Heart right ventricle (tissue), 16 donors: ENCODE measurements at regions of chr1 and their contacts with region 1.

Region 1: DNA sequence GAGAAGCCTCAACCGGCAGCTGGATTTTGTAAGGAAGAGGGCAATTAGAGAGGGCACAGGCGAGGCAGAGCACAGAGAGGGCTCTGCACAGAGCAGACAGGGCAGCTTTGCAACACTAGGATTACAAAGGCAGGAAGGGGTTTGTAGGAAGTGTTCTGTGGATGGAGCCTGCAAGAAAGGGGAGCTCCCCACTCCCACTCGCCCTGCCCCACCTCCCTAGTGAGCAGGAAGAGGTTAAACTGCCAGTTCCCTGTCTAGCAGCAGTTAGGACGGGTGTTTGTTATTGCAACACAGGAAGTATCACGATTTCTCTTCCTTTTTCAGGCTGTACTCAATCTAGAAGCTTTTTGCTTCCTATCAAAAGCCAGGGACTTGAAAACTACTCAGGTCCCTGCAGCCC is 63.3 kb upstream of the LRRC8D start:
- DNase-seq: peak; percentile 32 to 39
- ATAC-seq: peak; percentile 32 to 81 (median 66)
- H3K4me3 ChIP-seq: peak overlapping the region in 5 of 10 donors; percentile 2 to 31 (median 18)
- H3K27ac ChIP-seq: peak overlapping the region in 9 of 10 donors; percentile 26 to 81 (median 70)
- H3K4me1 ChIP-seq: peaks cover 8 to 94% (median 58%) of the 10 kb centered on the region in 9 donors
- H3K27me3 ChIP-seq: no peaks in the 10 kb centered on the region
- CTCF ChIP-seq: no peak

Region 2: GRCh38 chr1:89706700-89707012 is 50.9 kb before region 1 on chr1:
- intact Hi-C with region 1: loop called in 1 of 10 experiments (anchors 10 kb)
- DNase-seq: no peak
- ATAC-seq: peak in 1 of 8 donors; percentile 31
- H3K4me3 ChIP-seq: no peak overlapping the region
- H3K27ac ChIP-seq: peak overlapping the region in 1 of 10 donors; percentile 42
- H3K4me1 ChIP-seq: peaks cover 5 to 46% (median 13%) of the 10 kb centered on the region in 9 donors
- H3K27me3 ChIP-seq: no peaks in the 10 kb centered on the region
- CTCF ChIP-seq: no peak

Region 3: DNA sequence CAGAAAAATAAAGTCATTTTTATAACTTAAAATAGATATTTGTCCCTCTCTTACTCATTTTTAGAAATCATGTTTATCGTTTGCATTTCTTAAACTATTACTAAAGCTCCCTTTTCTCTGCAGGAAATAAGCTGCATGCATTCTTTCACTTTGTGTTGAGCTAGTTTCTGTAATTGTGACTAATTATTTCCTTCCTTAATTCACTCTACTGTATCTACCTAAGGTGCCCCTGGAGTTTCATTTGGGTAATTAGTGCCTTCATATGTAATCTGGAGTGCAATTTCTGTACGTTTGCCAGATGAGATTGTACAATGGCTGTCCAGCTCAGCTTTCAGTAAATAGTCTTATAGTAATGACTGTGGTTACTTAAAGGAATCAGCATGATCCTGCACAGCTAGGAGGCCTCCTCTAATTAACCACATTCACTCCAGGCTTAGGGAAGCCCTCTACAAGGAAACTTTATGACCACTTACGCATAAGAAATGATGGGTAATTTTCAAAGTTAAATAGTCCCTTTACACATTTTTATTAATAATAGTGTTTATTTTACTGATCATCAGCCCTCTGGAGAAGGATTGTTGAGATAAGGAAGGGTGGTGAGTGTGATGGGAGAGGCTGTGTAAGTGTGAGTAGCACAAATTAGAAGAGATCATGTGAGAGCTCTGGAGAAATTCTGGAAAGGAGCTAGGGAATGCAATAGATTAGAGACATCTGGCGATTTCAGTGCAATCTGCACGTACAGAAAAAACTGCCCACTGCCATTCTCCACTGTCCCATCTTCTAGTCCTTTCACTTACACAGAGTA is 37.8 kb before region 1 on chr1:
- intact Hi-C with region 1: loop called in 5 of 10 experiments (anchors 5 kb)
- DNase-seq: no peak
- ATAC-seq: peak in 2 of 8 donors; percentile 14 to 37
- H3K4me3 ChIP-seq: peak overlapping the region in 1 of 10 donors; percentile 5
- H3K27ac ChIP-seq: peak overlapping the region in 7 of 10 donors; percentile 18 to 86 (median 54)
- H3K4me1 ChIP-seq: peaks cover 9 to 68% (median 44%) of the 10 kb centered on the region in 9 donors
- H3K27me3 ChIP-seq: no peaks in the 10 kb centered on the region
- CTCF ChIP-seq: no peak

Region 4: GRCh38 chr1:89728381-89728780 is 29.2 kb before region 1 on chr1:
- intact Hi-C with region 1: loop called in 6 of 10 experiments (anchors 2 to 5 kb)
- DNase-seq: no peak
- ATAC-seq: peak; percentile 18 to 69 (median 60)
- H3K4me3 ChIP-seq: peak overlapping the region in 4 of 10 donors; percentile 6 to 25 (median 18)
- H3K27ac ChIP-seq: peak overlapping the region; percentile 56 to 86 (median 68)
- H3K4me1 ChIP-seq: peaks cover 9 to 59% (median 48%) of the 10 kb centered on the region in 9 donors
- H3K27me3 ChIP-seq: no peaks in the 10 kb centered on the region
- CTCF ChIP-seq: no peak

Region 5: DNA sequence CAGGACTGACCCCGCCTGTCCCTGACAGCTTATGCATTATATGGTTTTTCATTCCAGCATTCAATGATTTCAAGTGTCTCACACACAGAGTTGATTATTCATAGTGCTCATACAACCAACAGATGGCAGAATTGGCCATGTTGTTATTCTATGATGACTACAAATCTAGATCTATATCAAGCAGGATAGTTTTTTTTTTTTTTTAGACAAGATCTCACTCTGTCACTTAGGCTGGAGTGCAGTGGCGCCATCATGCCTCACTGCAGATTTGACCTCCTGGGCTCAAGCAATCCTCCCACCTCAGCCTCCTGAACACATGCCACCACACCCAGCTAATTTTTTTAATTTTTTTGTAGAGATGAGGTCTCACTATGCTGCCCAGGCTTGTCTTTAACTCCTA is 23.2 kb after region 1 on chr1:
- intact Hi-C with region 1: no loop called
- DNase-seq: no peak
- ATAC-seq: no peak
- H3K4me3 ChIP-seq: no peak overlapping the region
- H3K27ac ChIP-seq: no peak overlapping the region
- H3K4me1 ChIP-seq: no peaks in the 10 kb centered on the region
- H3K27me3 ChIP-seq: peaks cover 0 to 3% (median 0%) of the 10 kb centered on the region in 7 donors
- CTCF ChIP-seq: peak in 5 of 9 donors; percentile 6 to 36 (median 19)

Region 6: GRCh38 chr1:89791064-89791726 is 33.7 kb after region 1 on chr1:
- intact Hi-C with region 1: no loop called
- DNase-seq: no peak
- ATAC-seq: no peak
- H3K4me3 ChIP-seq: no peak overlapping the region
- H3K27ac ChIP-seq: no peak overlapping the region
- H3K4me1 ChIP-seq: no peaks in the 10 kb centered on the region
- H3K27me3 ChIP-seq: no peaks in the 10 kb centered on the region
- CTCF ChIP-seq: no peak